Breast epithelium (tissue), 4 donors: ENCODE measurements at regions of chr3 and their contacts with region 1.

Region 1: DNA sequence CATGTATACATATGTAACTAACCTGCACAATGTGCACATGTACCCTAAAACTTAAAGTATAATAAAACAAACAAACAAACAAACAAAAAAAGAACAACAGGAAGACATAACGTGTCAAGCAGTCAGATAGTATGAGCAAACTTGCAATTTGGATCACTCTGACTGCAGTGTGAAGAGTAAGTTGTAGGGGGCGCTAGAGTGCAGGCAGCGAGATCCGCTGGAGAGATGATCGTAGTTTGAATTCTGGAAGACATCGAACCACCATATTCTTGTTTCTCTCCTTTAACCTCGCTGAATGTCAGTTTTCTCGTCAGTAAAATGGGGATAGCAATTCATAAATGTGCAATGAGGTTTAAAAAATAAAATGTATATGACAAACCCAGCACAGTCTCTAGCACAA is 165.2 kb upstream of the LMCD1 start:
- DNase-seq: no peak
- H3K4me3 ChIP-seq: no peak overlapping the region
- H3K27ac ChIP-seq: no peak overlapping the region
- H3K4me1 ChIP-seq: no peaks in the 10 kb centered on the region
- H3K27me3 ChIP-seq: no peaks in the 10 kb centered on the region
- CTCF ChIP-seq: no peak
- POLR2A ChIP-seq: no peak

Region 2: GRCh38 chr3:7075901-7076300 is 1260.6 kb before region 1 on chr3:
- intact Hi-C with region 1: loop called (anchors 10 kb)
- DNase-seq: no peak
- H3K4me3 ChIP-seq: no peak overlapping the region
- H3K27ac ChIP-seq: no peak overlapping the region
- H3K4me1 ChIP-seq: no peaks in the 10 kb centered on the region
- H3K27me3 ChIP-seq: no peaks in the 10 kb centered on the region
- CTCF ChIP-seq: no peak
- POLR2A ChIP-seq: no peak

Region 3: DNA sequence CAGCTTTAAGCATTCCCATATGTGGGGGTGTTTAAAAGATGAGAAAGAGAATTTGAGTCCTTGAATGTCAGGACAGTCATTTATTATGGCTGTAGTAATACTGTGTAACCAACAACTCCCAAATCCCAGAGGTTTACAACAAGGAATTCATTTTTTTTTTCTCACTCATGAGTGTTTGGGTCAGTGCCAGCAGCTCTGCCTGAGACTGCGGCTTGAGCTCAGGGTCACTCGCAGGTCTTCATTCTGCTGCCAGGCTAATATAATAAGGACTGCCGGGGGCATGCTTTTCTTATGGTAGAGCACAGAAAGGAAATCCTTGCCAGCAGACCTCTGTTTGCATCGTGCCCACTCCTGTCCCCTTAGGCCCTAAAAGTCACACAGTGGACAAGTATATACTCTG is 112.7 kb before region 1 on chr3:
- intact Hi-C with region 1: no loop called
- DNase-seq: no peak
- H3K4me3 ChIP-seq: no peak overlapping the region
- H3K27ac ChIP-seq: no peak overlapping the region
- H3K4me1 ChIP-seq: no peaks in the 10 kb centered on the region
- H3K27me3 ChIP-seq: no peaks in the 10 kb centered on the region
- CTCF ChIP-seq: no peak
- POLR2A ChIP-seq: no peak

Region 4: DNA sequence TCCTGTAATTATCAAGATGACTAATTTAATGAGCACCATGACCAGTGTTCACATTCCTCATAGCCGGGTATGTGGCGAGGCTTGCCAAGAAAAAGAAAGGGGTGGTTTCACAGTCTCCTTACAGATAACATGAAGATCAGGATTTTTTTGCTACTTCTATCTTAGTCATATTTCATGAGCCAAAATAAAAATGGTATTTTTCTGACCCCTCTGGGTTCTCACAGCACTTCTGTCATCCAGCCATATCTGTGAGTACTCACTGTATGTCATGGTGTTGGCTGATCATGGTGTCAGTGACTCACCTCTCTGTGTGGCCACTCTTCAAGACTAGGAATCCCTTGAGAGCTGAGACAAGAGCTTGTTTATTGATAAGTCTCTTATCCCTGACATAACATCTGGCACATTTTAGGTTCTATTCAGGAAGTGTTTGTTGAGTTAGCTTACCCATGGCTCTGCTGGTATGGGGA is 34.7 kb after region 1 on chr3:
- intact Hi-C with region 1: no loop called
- DNase-seq: no peak
- H3K4me3 ChIP-seq: no peak overlapping the region
- H3K27ac ChIP-seq: no peak overlapping the region
- H3K4me1 ChIP-seq: no peaks in the 10 kb centered on the region
- H3K27me3 ChIP-seq: no peaks in the 10 kb centered on the region
- CTCF ChIP-seq: no peak
- POLR2A ChIP-seq: no peak